ENCODE measurements at regions of chr6 and their contacts with region 1.

Region 1: GRCh38 chr6:66289889-66290288 is 582.9 kb upstream of the EYS start:
- DNase-seq: no peak
- ATAC-seq: no peak
- H3K4me3 ChIP-seq: no peak overlapping the region
- H3K27ac ChIP-seq: no peak overlapping the region
- H3K4me1 ChIP-seq: no peaks in the 10 kb centered on the region
- H3K27me3 ChIP-seq: no peaks in the 10 kb centered on the region

Region 2: GRCh38 chr6:66065313-66065712 is 224.6 kb before region 1 on chr6:
- intact Hi-C with region 1: no loop called
- DNase-seq: no peak
- ATAC-seq: no peak
- H3K4me3 ChIP-seq: no peak overlapping the region
- H3K27ac ChIP-seq: no peak overlapping the region
- H3K4me1 ChIP-seq: no peaks in the 10 kb centered on the region
- H3K27me3 ChIP-seq: no peaks in the 10 kb centered on the region

Region 3: DNA sequence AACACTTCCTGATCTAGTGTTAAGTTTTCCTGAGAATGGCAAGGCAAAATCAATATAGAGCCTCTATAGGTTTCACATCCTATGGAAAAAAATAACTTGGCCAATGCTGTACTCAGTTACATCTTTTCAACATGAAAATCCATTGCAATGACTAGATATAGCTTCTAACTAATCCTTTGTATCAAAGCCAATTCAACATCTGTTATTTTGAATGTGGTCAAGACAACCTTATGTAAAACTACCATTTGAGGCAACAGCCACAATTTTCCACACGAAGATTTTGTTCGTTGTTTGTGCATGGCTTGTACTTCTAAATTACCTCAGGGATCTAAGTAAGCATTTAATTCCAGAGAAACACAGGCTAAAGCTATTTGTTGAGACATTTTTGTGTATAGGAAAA is 54.9 kb after region 1 on chr6:
- intact Hi-C with region 1: loop called in 1 of 4 experiments (anchors 5 kb)
- DNase-seq: no peak
- ATAC-seq: no peak
- H3K4me3 ChIP-seq: no peak overlapping the region
- H3K27ac ChIP-seq: no peak overlapping the region
- H3K4me1 ChIP-seq: no peaks in the 10 kb centered on the region
- H3K27me3 ChIP-seq: no peaks in the 10 kb centered on the region

Region 4: GRCh38 chr6:66499851-66500250 is 210.0 kb after region 1 on chr6:
- intact Hi-C with region 1: no loop called
- DNase-seq: no peak
- ATAC-seq: no peak
- H3K4me3 ChIP-seq: no peak overlapping the region
- H3K27ac ChIP-seq: no peak overlapping the region
- H3K4me1 ChIP-seq: no peaks in the 10 kb centered on the region
- H3K27me3 ChIP-seq: no peaks in the 10 kb centered on the region